MCF 10A (cell line): ENCODE measurements at regions of chr16 and their contacts with region 1.

Region 1: DNA sequence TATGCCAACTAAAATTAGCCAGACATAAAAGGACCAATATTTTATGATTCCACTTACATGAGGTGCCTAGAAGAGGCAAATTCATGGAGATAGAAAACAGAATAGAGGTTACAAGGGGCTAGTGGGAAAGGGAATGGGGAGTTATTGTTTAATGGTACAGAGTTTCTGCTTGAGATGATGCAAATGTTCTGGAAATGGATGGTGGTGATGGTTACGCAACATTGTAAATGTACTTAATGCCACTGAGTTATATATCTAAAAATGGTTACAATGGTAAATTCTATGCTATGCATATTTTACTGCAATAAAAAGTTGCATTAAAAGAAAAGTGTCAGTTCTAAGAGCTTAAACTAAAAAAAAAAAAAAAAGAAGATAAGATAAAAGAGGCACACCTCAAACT is 17.9 kb downstream of the MT1X start:
- DNase-seq: peak; percentile 49
- H3K4me3 Mint-ChIP-seq: no peak overlapping the region
- H3K27ac Mint-ChIP-seq: peak overlapping the region; percentile 16
- H3K4me1 Mint-ChIP-seq: peaks cover 10% of the 10 kb centered on the region
- H3K27me3 Mint-ChIP-seq: no peaks in the 10 kb centered on the region
- CTCF ChIP-seq: no peak

Region 2: GRCh38 chr16:56506941-56507340 is 193.3 kb before region 1 on chr16:
- CTCF ChIA-PET with region 1: interaction called, 15 read pairs
- POLR2A ChIA-PET with region 1: interaction called, 5 read pairs
- intact Hi-C with region 1: no loop called
- DNase-seq: no peak
- H3K4me3 Mint-ChIP-seq: no peak overlapping the region
- H3K27ac Mint-ChIP-seq: peak overlapping the region; percentile 21
- H3K4me1 Mint-ChIP-seq: no peaks in the 10 kb centered on the region
- H3K27me3 Mint-ChIP-seq: no peaks in the 10 kb centered on the region
- CTCF ChIP-seq: no peak

Region 3: DNA sequence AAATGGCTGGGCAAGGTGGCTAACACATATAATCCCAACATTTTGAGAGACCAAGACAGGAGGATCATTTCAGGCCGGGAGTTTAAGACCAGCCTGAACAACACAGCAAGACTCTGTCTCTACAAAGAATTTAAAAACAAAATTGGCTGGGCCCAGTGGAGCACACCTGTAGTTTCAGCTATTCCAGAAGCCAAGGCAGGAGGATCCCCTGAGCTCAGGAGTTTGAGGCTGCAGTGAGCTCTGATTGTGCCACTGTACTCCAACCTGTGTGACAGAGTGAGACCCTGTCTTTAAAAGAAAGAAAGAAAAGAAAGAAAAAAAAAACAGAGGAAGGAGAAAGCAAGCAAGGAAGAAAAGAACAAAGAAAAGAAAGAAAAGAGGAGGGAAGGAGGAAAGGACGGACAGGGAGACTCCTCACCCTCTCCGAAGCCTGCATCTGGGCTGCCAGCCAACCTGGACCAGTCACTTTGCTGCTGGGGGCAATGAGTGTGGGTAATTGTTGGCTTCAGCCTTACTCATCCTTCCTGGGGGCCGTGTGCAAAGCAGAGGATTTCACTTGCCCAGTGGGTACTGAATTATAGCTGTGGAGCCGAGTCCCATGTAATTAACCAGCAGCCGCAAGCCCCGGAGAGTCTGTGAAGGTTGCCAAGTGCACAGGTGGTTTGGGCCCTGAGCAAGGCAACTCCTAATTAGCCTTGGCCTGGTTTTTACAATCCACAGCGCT is 142.0 kb before region 1 on chr16:
- CTCF ChIA-PET with region 1: no interaction called
- POLR2A ChIA-PET with region 1: no interaction called
- intact Hi-C with region 1: no loop called
- DNase-seq: peak; percentile 93
- H3K4me3 Mint-ChIP-seq: no peak overlapping the region
- H3K27ac Mint-ChIP-seq: no peak overlapping the region
- H3K4me1 Mint-ChIP-seq: peaks cover 7% of the 10 kb centered on the region
- H3K27me3 Mint-ChIP-seq: peaks cover 11% of the 10 kb centered on the region
- CTCF ChIP-seq: no peak

Region 4: GRCh38 chr16:56576585-56577293 is 123.5 kb before region 1 on chr16:
- CTCF ChIA-PET with region 1: interaction called, 51 read pairs
- POLR2A ChIA-PET with region 1: interaction called, 10 read pairs
- intact Hi-C with region 1: loop called (anchors 1 kb)
- DNase-seq: peak; percentile 92
- H3K4me3 Mint-ChIP-seq: no peak overlapping the region
- H3K27ac Mint-ChIP-seq: peak overlapping the region; percentile 17
- H3K4me1 Mint-ChIP-seq: peaks cover 10% of the 10 kb centered on the region
- H3K27me3 Mint-ChIP-seq: no peaks in the 10 kb centered on the region
- CTCF ChIP-seq: peak; percentile 92

Region 5: DNA sequence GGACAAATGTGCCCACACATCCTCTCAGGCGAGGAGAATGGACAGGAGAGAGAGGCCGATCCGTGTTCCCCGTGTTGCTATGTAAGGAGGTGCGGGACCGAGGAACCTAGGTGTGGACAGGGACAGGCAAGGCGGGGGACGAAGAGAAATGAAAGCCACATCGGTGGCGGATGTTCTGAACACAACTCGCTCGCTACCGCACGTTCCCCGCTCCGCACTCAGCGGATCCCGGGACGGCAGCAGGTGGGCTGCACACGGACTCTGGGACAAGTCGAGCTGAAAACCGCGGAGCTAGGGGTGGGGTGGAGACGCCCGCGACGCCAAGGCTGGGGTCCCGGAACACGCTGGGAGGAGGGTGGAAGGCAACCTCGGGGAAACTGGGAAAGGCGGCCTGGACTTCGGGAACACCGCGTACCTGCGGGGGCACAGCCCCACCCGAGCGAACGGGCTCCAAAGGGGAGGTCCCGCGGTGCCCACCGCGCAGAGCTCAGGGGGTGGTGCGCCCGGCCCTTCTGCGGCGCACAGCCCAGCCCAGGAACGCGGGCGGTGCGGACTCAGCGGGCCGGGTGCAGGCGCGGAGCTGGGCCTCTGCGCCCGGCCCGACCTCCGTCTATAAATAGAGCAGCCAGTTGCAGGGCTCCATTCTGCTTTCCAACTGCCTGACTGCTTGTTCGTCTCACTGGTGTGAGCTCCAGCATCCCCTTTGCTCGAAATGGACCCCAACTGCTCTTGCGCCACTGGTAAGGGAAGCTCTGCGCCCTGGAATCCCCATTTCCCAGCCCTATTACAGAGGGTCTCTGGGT is 74.9 kb before region 1 on chr16 and contains the start of gene MT1E:
- CTCF ChIA-PET with region 1: interaction called, 12 read pairs
- POLR2A ChIA-PET with region 1: interaction called, 50 read pairs
- intact Hi-C with region 1: no loop called
- DNase-seq: peak; percentile 81
- H3K4me3 Mint-ChIP-seq: peak within 1 kb of the TSS; percentile 95
- H3K27ac Mint-ChIP-seq: peak within 1 kb of the TSS; percentile 81
- H3K4me1 Mint-ChIP-seq: peaks cover 11% of the 10 kb centered on the region
- H3K27me3 Mint-ChIP-seq: no peaks in the 10 kb centered on the region
- CTCF ChIP-seq: no peak
- total RNA-seq, gene MT1E: 518 and 934 TPM in 2 replicates

Region 6: GRCh38 chr16:56681939-56682702 is 18.1 kb before region 1 on chr16 and contains the start of gene MT1X:
- CTCF ChIA-PET with region 1: interaction called, 12 read pairs
- POLR2A ChIA-PET with region 1: interaction called, 52 read pairs
- intact Hi-C with region 1: no loop called
- DNase-seq: peak; percentile 95
- H3K4me3 Mint-ChIP-seq: peak within 1 kb of the TSS; percentile 70
- H3K27ac Mint-ChIP-seq: peak within 1 kb of the TSS; percentile 67
- H3K4me1 Mint-ChIP-seq: peaks cover 26% of the 10 kb centered on the region
- H3K27me3 Mint-ChIP-seq: no peaks in the 10 kb centered on the region
- CTCF ChIP-seq: no peak
- total RNA-seq, gene MT1X: 79.3 and 108 TPM in 2 replicates

Region 7: GRCh38 chr16:56743840-56744239 is 43.6 kb after region 1 on chr16:
- CTCF ChIA-PET with region 1: no interaction called
- POLR2A ChIA-PET with region 1: no interaction called
- intact Hi-C with region 1: no loop called
- DNase-seq: peak; percentile 81
- H3K4me3 Mint-ChIP-seq: peak overlapping the region; percentile 39
- H3K27ac Mint-ChIP-seq: peak overlapping the region; percentile 60
- H3K4me1 Mint-ChIP-seq: peaks cover 12% of the 10 kb centered on the region
- H3K27me3 Mint-ChIP-seq: no peaks in the 10 kb centered on the region
- CTCF ChIP-seq: no peak

Region 8: GRCh38 chr16:56869513-56870275 is 169.5 kb after region 1 on chr16:
- CTCF ChIA-PET with region 1: no interaction called
- POLR2A ChIA-PET with region 1: no interaction called
- intact Hi-C with region 1: no loop called
- DNase-seq: peak; percentile 57
- H3K4me3 Mint-ChIP-seq: no peak overlapping the region
- H3K27ac Mint-ChIP-seq: no peak overlapping the region
- H3K4me1 Mint-ChIP-seq: peaks cover 5% of the 10 kb centered on the region
- H3K27me3 Mint-ChIP-seq: no peaks in the 10 kb centered on the region
- CTCF ChIP-seq: peak; percentile 29

Region 9: GRCh38 chr16:56884026-56884582 is 183.9 kb after region 1 on chr16:
- CTCF ChIA-PET with region 1: no interaction called
- POLR2A ChIA-PET with region 1: no interaction called
- intact Hi-C with region 1: no loop called
- DNase-seq: no peak
- H3K4me3 Mint-ChIP-seq: no peak overlapping the region
- H3K27ac Mint-ChIP-seq: no peak overlapping the region
- H3K4me1 Mint-ChIP-seq: no peaks in the 10 kb centered on the region
- H3K27me3 Mint-ChIP-seq: no peaks in the 10 kb centered on the region
- CTCF ChIP-seq: no peak